ENCODE measurements at regions of chr9 and their contacts with region 1.

Region 1: GRCh38 chr9:23492126-23493002 is 333.7 kb downstream of the ELAVL2 start:
- DNase-seq: peak; percentile 10
- H3K4me3 Mint-ChIP-seq: no peak overlapping the region
- H3K27ac Mint-ChIP-seq: no peak overlapping the region
- H3K4me1 Mint-ChIP-seq: no peaks in the 10 kb centered on the region
- H3K27me3 Mint-ChIP-seq: no peaks in the 10 kb centered on the region
- CTCF ChIP-seq: no peak

Region 2: GRCh38 chr9:22813529-22813928 is 678.8 kb before region 1 on chr9:
- CTCF ChIA-PET with region 1: no interaction called
- intact Hi-C with region 1: loop called (anchors 10 kb)
- DNase-seq: no peak
- H3K4me3 Mint-ChIP-seq: no peak overlapping the region
- H3K27ac Mint-ChIP-seq: no peak overlapping the region
- H3K4me1 Mint-ChIP-seq: no peaks in the 10 kb centered on the region
- H3K27me3 Mint-ChIP-seq: peaks cover 19% of the 10 kb centered on the region
- CTCF ChIP-seq: no peak

Region 3: GRCh38 chr9:23123048-23123632 is 369.2 kb before region 1 on chr9:
- CTCF ChIA-PET with region 1: no interaction called
- intact Hi-C with region 1: loop called (anchors 1 kb)
- DNase-seq: peak; percentile 31
- H3K4me3 Mint-ChIP-seq: no peak overlapping the region
- H3K27ac Mint-ChIP-seq: no peak overlapping the region
- H3K4me1 Mint-ChIP-seq: no peaks in the 10 kb centered on the region
- H3K27me3 Mint-ChIP-seq: no peaks in the 10 kb centered on the region
- CTCF ChIP-seq: peak; percentile 26

Region 4: DNA sequence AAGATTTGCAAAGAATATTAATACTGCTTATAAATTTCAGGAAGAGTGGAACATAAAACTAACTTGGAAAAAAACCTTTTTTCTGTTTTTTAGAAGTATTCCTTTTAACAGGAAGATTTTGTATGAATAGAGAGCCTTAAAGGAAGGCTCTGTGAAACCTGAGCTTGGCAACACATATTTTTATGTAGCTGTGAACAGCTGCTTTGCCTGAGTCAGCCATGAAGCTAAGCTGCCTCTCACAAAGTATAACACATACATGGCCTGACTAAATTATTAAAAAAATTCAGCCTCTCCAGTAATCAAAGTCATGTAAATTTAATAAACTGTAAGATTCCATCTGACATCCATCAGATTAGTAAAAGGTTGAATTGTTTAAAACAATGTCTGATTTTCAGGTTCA is 213.8 kb before region 1 on chr9:
- CTCF ChIA-PET with region 1: no interaction called
- intact Hi-C with region 1: no loop called
- DNase-seq: no peak
- H3K4me3 Mint-ChIP-seq: no peak overlapping the region
- H3K27ac Mint-ChIP-seq: no peak overlapping the region
- H3K4me1 Mint-ChIP-seq: no peaks in the 10 kb centered on the region
- H3K27me3 Mint-ChIP-seq: no peaks in the 10 kb centered on the region
- CTCF ChIP-seq: no peak

Region 5: GRCh38 chr9:23693374-23693773 is 201.0 kb after region 1 on chr9:
- CTCF ChIA-PET with region 1: no interaction called
- intact Hi-C with region 1: loop called (anchors 10 kb)
- DNase-seq: no peak
- H3K4me3 Mint-ChIP-seq: no peak overlapping the region
- H3K27ac Mint-ChIP-seq: no peak overlapping the region
- H3K4me1 Mint-ChIP-seq: no peaks in the 10 kb centered on the region
- H3K27me3 Mint-ChIP-seq: no peaks in the 10 kb centered on the region
- CTCF ChIP-seq: no peak

Measured in Calu3 (cell line).